Heart right ventricle (tissue), 16 donors: ENCODE measurements at regions of chr2 and their contacts with region 1.

Region 1: DNA sequence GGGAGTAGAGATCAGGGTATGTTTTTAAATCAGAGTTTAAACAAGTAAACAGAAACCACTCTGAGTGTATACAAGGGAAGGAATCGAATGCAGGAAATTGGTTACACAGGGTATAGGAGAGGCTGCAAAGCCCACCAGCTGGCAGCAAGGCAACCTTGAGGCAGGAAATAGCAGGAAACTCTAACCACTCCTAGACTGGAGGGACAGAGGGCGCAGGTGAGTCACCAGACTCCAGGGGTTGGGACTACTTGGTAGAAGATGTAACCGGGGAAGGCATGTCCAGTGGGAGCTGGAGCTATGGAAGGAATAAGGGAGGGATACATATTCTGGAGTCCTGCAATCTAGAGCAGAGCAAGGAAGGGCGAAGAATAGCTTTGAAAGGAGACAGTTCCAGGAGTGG is 152.3 kb downstream of the MEIS1 start:
- DNase-seq: no peak
- ATAC-seq: peak in 1 of 8 donors; percentile 41
- H3K4me3 ChIP-seq: no peak overlapping the region
- H3K27ac ChIP-seq: no peak overlapping the region
- H3K4me1 ChIP-seq: peaks cover 0 to under 1% (median 0%) of the 10 kb centered on the region in 9 donors
- H3K27me3 ChIP-seq: peaks cover 0 to 69% (median 50%) of the 10 kb centered on the region in 7 donors
- CTCF ChIP-seq: peak in 3 of 9 donors; percentile 10 to 19 (median 15)

Region 2: GRCh38 chr2:67476809-67477790 is 889.9 kb after region 1 on chr2:
- intact Hi-C with region 1: loop called in 1 of 10 experiments (anchors 10 kb)
- DNase-seq: no peak
- ATAC-seq: peak in 5 of 8 donors; percentile 37 to 65 (median 53)
- H3K4me3 ChIP-seq: no peak overlapping the region
- H3K27ac ChIP-seq: peak overlapping the region in 1 of 10 donors; percentile 69
- H3K4me1 ChIP-seq: peaks cover 0 to 6% (median 0%) of the 10 kb centered on the region in 9 donors
- H3K27me3 ChIP-seq: no peaks in the 10 kb centered on the region
- CTCF ChIP-seq: peak in 7 of 9 donors; percentile 43 to 62 (median 50)

Region 3: GRCh38 chr2:67854798-67855197 is 1267.6 kb after region 1 on chr2:
- intact Hi-C with region 1: loop called in 4 of 10 experiments (anchors 10 kb)
- DNase-seq: no peak
- ATAC-seq: no peak
- H3K4me3 ChIP-seq: no peak overlapping the region
- H3K27ac ChIP-seq: no peak overlapping the region
- H3K4me1 ChIP-seq: peaks cover 0 to 2% (median 0%) of the 10 kb centered on the region in 9 donors
- H3K27me3 ChIP-seq: peaks cover 0 to 19% (median 13%) of the 10 kb centered on the region in 7 donors
- CTCF ChIP-seq: no peak

Region 4: GRCh38 chr2:68031542-68032160 is 1444.4 kb after region 1 on chr2:
- intact Hi-C with region 1: loop called in 1 of 10 experiments (anchors 10 kb)
- DNase-seq: no peak
- ATAC-seq: no peak
- H3K4me3 ChIP-seq: no peak overlapping the region
- H3K27ac ChIP-seq: no peak overlapping the region
- H3K4me1 ChIP-seq: peaks cover 0 to 3% (median 0%) of the 10 kb centered on the region in 9 donors
- H3K27me3 ChIP-seq: peaks cover 0 to 10% (median 0%) of the 10 kb centered on the region in 7 donors
- CTCF ChIP-seq: peak; percentile 48 to 81 (median 72)